Ovary (tissue), 10 donors: ENCODE measurements at regions of chr13 and their contacts with region 1.

Region 1: GRCh38 chr13:65724226-65724625 is 1505.9 kb downstream of the PCDH9 start:
- DNase-seq: no peak
- H3K4me3 ChIP-seq: no peak overlapping the region
- H3K27ac ChIP-seq: no peak overlapping the region
- H3K4me1 ChIP-seq: no peaks in the 10 kb centered on the region
- H3K27me3 ChIP-seq: no peaks in the 10 kb centered on the region
- CTCF ChIP-seq: no peak
- EP300 ChIP-seq: no peak
- POLR2A ChIP-seq: no peak

Region 2: DNA sequence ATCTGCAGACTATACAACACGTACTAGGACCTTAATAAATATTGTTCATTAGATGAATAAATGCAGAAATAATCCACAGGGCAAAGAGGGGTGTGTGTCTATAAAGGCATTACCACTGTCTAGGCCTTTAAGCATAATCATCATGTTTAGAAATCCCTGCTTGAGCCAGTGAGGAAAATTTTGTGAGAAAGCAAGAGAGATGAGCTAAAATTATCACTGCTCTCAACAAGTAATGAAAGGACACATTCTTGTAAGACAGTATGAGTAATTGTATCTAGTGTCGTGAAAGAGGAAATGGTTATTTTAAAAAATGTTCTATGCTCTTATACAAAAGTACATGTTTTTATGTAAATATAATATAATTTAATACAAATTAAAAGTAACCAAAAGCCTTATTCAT is 193.5 kb before region 1 on chr13:
- intact Hi-C with region 1: loop called in 1 of 4 experiments (anchors 5 kb)
- DNase-seq: no peak
- H3K4me3 ChIP-seq: no peak overlapping the region
- H3K27ac ChIP-seq: no peak overlapping the region
- H3K4me1 ChIP-seq: no peaks in the 10 kb centered on the region
- H3K27me3 ChIP-seq: no peaks in the 10 kb centered on the region
- CTCF ChIP-seq: no peak
- EP300 ChIP-seq: no peak
- POLR2A ChIP-seq: no peak

Region 3: DNA sequence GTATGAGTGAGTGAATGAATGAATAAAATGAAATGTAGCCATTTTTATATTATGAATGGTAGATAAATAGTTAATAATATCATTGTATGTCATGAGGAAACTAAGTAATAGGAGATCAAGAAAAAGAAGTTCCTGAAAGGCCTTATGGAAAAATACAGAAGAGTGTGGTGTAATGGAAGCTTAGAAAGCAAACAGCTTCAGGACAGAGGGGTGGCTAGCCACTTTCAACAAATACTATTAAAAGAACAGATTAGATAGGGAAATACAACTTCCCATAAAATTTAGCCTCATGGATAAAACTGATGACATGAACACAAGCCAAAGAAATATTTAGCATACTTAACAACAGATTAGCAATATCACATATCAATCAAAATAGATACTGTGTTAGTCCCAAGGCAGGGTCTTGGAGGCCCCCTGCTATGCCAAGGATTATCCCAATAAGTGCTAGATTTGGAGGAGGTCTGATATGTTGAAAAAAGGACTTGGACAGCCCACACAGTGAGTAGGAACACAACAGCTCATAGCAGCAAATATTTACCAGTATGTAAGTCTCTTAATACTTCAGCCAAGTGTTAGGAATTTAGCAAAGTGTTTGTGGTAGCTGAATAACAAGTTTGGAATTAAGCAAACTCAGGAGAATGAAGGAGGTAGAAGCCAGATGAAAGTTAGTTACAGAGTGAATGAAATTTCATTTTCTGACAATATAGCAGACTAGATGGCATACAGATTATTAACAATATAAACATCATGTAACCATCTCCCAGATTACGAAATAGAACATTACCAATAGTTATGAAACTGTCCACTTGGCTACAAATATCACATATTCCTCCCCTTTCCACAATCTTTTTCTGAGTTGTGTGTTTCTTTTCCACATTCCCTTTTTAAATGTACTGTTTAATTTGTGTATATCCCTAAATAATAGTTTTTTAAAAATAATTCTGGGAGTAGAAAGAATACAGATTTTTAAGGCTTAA is 126.1 kb before region 1 on chr13:
- intact Hi-C with region 1: no loop called
- DNase-seq: no peak
- H3K4me3 ChIP-seq: no peak overlapping the region
- H3K27ac ChIP-seq: no peak overlapping the region
- H3K4me1 ChIP-seq: no peaks in the 10 kb centered on the region
- H3K27me3 ChIP-seq: no peaks in the 10 kb centered on the region
- CTCF ChIP-seq: no peak
- EP300 ChIP-seq: no peak
- POLR2A ChIP-seq: no peak